Adrenal gland (tissue), 19 donors: ENCODE measurements at regions of chr3 and their contacts with region 1.

Region 1: DNA sequence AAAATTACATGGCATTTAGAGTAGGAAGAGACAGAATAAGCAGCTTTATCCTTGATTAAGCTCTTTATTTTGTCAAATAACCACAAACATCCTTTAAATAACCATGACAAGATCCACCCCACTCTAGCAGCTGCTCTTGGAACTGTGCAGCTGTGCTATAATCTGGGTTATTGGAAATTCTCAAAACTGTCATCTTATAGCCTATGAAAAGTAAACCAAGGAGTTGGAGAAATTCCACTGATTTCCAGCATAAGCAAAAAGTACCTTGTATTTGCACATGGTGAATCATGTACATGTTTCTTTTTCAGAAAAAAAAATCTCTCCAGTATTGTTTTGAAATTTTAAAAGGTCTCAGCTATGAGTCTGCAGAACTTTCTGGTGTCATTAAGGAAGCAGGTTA is 88.8 kb upstream of the ABI3BP start:
- DNase-seq: no peak
- H3K4me3 ChIP-seq: no peak overlapping the region
- H3K27ac ChIP-seq: no peak overlapping the region
- H3K4me1 ChIP-seq: peaks cover 0 to 5% of the 10 kb centered on the region in 2 donors
- H3K27me3 ChIP-seq: no peaks in the 10 kb centered on the region
- CTCF ChIP-seq: no peak
- POLR2A ChIP-seq: no peak

Region 2: DNA sequence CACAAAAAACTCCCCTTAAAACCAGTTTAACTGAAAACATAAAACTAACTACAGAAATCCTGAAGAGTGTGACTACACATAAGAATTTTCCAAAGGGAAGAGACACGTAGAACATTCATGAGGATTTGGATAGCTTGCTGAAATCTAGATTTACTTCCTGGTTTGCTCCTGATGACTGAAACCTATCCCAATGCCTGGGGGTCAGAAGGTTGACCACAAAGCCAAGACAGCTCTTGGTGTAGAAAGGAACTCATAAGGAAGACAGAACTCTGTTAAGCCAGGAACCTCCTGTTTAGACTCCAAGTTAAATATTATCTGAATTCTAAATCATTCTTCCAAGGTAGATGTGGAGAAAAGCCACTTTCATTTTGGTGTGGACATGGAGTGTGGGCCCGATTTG is 279.9 kb before region 1 on chr3:
- intact Hi-C with region 1: no loop called
- DNase-seq: no peak
- H3K4me3 ChIP-seq: no peak overlapping the region
- H3K27ac ChIP-seq: no peak overlapping the region
- H3K4me1 ChIP-seq: no peaks in the 10 kb centered on the region
- H3K27me3 ChIP-seq: no peaks in the 10 kb centered on the region
- CTCF ChIP-seq: no peak
- POLR2A ChIP-seq: no peak

Region 3: DNA sequence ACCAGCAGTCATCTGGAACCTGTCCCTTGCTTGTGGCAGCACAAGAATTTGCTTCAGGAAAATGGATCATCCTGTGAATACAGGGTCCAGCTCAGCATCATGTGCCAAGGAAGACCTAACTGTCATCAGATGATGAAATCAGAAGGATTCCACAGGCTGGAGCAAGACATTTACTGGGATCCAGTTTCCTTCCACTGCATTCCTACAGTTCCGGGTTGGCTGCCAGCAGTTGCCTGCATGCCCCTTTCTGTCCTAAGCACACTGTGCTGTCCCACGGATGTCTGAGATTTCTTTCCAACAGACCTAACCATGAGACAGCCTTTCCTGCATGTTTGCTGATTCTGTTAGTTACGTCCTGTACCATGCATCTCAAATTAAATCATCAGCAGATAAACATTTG is 97.6 kb after region 1 on chr3:
- intact Hi-C with region 1: loop called in 1 of 2 experiments (anchors 10 kb)
- DNase-seq: no peak
- H3K4me3 ChIP-seq: no peak overlapping the region
- H3K27ac ChIP-seq: no peak overlapping the region
- H3K4me1 ChIP-seq: no peaks in the 10 kb centered on the region
- H3K27me3 ChIP-seq: no peaks in the 10 kb centered on the region
- CTCF ChIP-seq: no peak
- POLR2A ChIP-seq: no peak